ENCODE measurements at regions of chr14 and their contacts with region 1.

Region 1: GRCh38 chr14:60622917-60623257 is 26.4 kb downstream of the SIX1 start:
- DNase-seq: no peak
- H3K4me3 ChIP-seq: no peak overlapping the region
- H3K27ac ChIP-seq: no peak overlapping the region
- H3K4me1 ChIP-seq: no peaks in the 10 kb centered on the region
- H3K27me3 ChIP-seq: peaks cover 0 to 10% (median 0%) of the 10 kb centered on the region in 3 donors
- CTCF ChIP-seq: no peak
- EP300 ChIP-seq: no peak
- POLR2A ChIP-seq: no peak

Region 2: GRCh38 chr14:59707778-59708561 is 914.9 kb before region 1 on chr14:
- intact Hi-C with region 1: no loop called
- DNase-seq: no peak
- H3K4me3 ChIP-seq: no peak overlapping the region
- H3K27ac ChIP-seq: no peak overlapping the region
- H3K4me1 ChIP-seq: no peaks in the 10 kb centered on the region
- H3K27me3 ChIP-seq: no peaks in the 10 kb centered on the region
- CTCF ChIP-seq: no peak
- EP300 ChIP-seq: no peak
- POLR2A ChIP-seq: no peak

Region 3: GRCh38 chr14:61025251-61026223 is 402.6 kb after region 1 on chr14:
- intact Hi-C with region 1: loop called (anchors 1 kb)
- DNase-seq: peak; percentile 78
- H3K4me3 ChIP-seq: no peak overlapping the region
- H3K27ac ChIP-seq: no peak overlapping the region
- H3K4me1 ChIP-seq: no peaks in the 10 kb centered on the region
- H3K27me3 ChIP-seq: no peaks in the 10 kb centered on the region
- CTCF ChIP-seq: peak; percentile 42 to 79 (median 70)
- EP300 ChIP-seq: no peak
- POLR2A ChIP-seq: no peak